ENCODE measurements at regions of chr9 and their contacts with region 1.

Region 1: GRCh38 chr9:128947422-128948301 is at the starts of genes DOLK and NUP188:
- DNase-seq: peak; percentile 80 to 98
- H3K4me3 ChIP-seq: peak within 1 kb of the TSS; percentile 96
- H3K27ac ChIP-seq: peak within 1 kb of the TSS; percentile 61
- H3K4me1 ChIP-seq: peaks cover 6% of the 10 kb centered on the region; the same call in 1 of the 2 replicates
- H3K27me3 ChIP-seq: no peaks in the 10 kb centered on the region
- CTCF ChIP-seq: no peak
- total RNA-seq, gene DOLK: 18.0 and 19.0 TPM in 2 replicates
- total RNA-seq, gene NUP188: 59.7 and 90.0 TPM in 2 replicates

Region 2: GRCh38 chr9:128034821-128035764 is 912.6 kb before region 1 on chr9:
- CTCF ChIA-PET with region 1: no interaction called
- POLR2A ChIA-PET with region 1: no interaction called
- intact Hi-C with region 1: no loop called
- DNase-seq: peak; percentile 77 to 85
- H3K4me3 ChIP-seq: no peak overlapping the region
- H3K27ac ChIP-seq: no peak overlapping the region
- H3K4me1 ChIP-seq: peaks cover 18% of the 10 kb centered on the region
- H3K27me3 ChIP-seq: no peaks in the 10 kb centered on the region
- CTCF ChIP-seq: peak; percentile 94

Region 3: GRCh38 chr9:128881901-128882681 is 65.6 kb before region 1 on chr9 and contains the starts of genes KYAT1 and LRRC8A:
- CTCF ChIA-PET with region 1: no interaction called
- POLR2A ChIA-PET with region 1: no interaction called
- intact Hi-C with region 1: loop called (anchors 5 kb)
- DNase-seq: peak; percentile 89 to 99
- H3K4me3 ChIP-seq: peak within 1 kb of the TSS; percentile 87
- H3K27ac ChIP-seq: peak within 1 kb of the TSS; percentile 77
- H3K4me1 ChIP-seq: peaks cover 20% of the 10 kb centered on the region
- H3K27me3 ChIP-seq: no peaks in the 10 kb centered on the region
- CTCF ChIP-seq: no peak
- total RNA-seq, gene KYAT1: 26.1 and 27.6 TPM in 2 replicates
- total RNA-seq, gene LRRC8A: 90.3 and 95.7 TPM in 2 replicates

Region 4: DNA sequence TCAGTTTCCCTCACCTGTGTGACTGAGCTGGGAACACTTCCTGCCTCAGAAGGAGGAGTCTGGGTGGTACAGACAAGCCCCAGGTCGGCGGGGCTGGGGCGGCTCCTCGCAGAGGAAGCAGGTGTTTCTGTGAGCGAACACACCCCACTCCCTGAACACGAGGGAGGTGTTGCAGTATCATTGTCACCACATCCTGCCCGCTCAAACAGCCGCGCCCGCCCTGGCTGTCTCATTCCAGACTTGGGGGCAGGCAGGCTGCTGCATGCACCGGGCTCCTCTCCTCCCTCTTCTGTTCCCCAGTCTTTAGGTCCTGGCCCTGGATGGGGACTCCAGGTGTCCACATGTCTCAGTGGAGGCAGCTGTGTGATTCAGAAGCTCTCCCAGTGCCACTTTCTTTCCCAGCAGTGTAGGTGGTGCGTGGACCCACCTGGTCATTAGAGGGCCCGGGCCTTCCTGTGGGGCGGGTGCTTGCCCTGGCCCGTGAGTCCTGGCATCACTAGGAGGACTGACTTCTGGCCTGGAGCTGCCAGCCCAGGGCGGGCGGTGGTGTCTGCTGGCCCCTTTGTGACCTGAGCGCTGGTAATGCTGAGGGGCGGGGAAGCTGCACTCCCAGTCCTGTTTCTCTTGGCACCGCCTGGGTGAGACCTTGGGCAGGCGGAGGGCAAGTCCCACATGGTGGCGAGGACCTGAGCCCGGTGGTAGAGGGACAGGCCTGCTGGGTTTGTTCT is 45.1 kb before region 1 on chr9:
- CTCF ChIA-PET with region 1: no interaction called
- POLR2A ChIA-PET with region 1: interaction called, 3 read pairs
- intact Hi-C with region 1: loop called (anchors 1 kb)
- DNase-seq: peak; percentile 62 to 93
- H3K4me3 ChIP-seq: no peak overlapping the region; the same call in 1 of the 2 replicates
- H3K27ac ChIP-seq: peak overlapping the region; percentile 88
- H3K4me1 ChIP-seq: peaks cover 67% of the 10 kb centered on the region
- H3K27me3 ChIP-seq: no peaks in the 10 kb centered on the region
- CTCF ChIP-seq: no peak

Region 5: DNA sequence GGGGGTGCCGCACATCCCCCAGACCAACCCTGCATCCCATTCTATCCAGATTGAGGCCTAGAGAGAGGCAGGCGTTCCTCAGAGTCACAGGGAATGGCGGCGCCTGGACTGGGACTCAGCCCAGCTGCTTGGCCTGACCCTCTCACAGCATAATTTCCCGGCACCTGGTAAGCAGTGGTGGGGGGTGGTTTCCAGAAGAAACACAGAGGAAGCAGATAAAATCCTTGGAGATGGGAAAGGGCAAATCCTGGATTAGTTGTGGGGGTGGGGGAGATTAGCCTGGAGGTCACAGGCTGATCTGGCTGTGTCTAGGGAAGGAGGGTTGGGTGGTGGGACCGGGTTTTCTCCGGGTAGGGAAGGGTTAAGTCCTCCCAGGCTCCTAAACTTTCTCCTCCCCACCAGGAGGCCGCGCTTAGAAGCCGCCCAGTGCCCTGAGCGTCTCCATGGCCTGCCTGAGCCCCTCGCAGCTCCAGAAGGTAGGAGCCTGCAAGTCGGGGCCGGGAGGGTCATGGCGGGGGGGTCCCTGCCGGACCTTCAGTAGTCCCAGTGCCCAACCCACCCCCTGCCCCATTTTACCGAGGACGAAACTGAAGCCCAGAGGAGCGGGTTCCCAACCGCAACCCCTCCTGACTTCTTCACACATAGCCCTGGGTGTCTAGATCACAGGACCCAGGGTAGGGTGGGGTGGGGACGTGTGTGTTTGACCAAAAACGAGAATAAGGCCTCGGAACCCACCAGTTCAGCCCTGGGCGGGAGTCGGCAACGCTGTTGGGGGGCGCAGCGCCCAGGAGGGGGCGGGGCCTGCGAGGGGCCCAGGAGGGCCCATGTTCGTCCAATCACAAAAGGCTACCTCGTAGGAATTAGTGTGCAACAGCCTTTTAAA is 25.5 kb before region 1 on chr9:
- CTCF ChIA-PET with region 1: no interaction called
- POLR2A ChIA-PET with region 1: interaction called, 12 read pairs
- intact Hi-C with region 1: no loop called
- DNase-seq: no peak
- H3K4me3 ChIP-seq: no peak overlapping the region
- H3K27ac ChIP-seq: no peak overlapping the region
- H3K4me1 ChIP-seq: no peaks in the 10 kb centered on the region
- H3K27me3 ChIP-seq: no peaks in the 10 kb centered on the region
- CTCF ChIP-seq: no peak

Measured in PC-9 (cell line).